Heart right ventricle (tissue), 16 donors: ENCODE measurements at regions of chr7 and their contacts with region 1.

Region 1: DNA sequence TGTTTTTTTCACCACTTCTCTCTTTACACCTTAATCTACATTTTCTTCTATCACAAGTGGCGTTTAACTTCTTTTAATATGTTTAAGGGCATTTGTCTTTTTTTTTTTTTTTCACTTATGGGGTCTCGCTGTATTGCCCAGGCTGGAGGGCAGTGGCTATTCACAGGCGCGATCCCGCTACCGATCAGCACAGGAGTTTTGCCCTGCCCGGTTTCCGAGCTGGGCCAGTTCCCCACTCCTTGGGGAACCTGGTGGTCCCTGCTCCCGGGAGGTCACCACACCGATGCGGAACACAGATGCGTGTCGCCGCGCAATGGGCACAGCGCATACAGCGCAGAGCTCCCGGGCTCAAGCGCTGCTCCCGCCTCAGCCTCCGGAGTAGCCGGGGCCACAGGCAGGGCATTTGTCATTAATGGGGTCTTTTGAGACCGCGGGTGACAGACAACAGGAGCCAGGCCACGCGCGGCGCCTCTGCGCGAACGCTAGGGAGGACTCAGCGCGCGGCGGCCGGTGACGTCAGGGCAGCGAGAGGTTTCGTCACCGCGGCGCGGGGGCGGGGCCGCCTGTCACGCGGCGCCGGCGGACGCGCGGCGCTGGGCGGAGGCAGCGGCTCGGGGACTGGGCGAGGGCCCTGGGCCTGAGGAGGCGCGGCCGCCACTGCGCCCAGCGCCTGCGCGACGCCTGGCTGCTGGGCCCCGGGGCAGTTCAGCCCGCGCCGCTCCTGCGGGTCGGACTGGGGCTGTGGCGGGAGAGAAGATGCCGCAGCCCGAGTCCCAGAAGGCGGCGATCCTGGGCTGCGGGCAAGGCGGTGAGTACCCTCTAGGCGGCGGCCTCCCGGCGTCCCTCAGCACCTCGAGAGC is at the start of gene GALNT11:
- DNase-seq: peak; percentile 79 to 89
- ATAC-seq: peak; percentile 96 to 100 (median 98)
- H3K4me3 ChIP-seq: peak within 1 kb of the TSS; percentile 64 to 96 (median 86)
- H3K27ac ChIP-seq: peak within 1 kb of the TSS in 9 of 10 donors; percentile 82 to 94 (median 87)
- H3K4me1 ChIP-seq: peaks cover 0 to 23% (median 13%) of the 10 kb centered on the region in 9 donors
- H3K27me3 ChIP-seq: no peaks in the 10 kb centered on the region
- CTCF ChIP-seq: peak in 5 of 9 donors; percentile 25 to 58 (median 40)
- total RNA-seq, gene GALNT11: 19.3 to 28.4 (median 22.9) TPM

Region 2: DNA sequence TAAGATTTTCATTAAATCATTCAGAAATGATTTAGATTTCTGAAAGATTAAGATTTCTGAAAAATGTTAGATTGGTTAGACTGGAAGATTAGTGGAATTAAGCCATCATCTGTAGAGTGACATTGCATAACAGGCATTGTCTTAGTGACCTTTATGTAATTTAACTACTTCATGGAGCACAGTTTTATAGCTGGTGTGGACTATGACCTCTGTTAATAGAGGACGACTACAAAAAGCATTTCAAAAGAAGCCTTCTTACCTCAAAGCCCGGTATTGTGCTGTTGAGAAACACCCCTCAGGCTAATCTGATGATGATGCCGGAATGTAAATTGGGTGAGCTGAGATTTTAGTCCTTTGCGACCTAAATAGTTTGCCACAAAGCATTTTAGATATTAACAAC is 55.8 kb after region 1 on chr7:
- intact Hi-C with region 1: no loop called
- DNase-seq: no peak
- ATAC-seq: no peak
- H3K4me3 ChIP-seq: no peak overlapping the region
- H3K27ac ChIP-seq: no peak overlapping the region
- H3K4me1 ChIP-seq: peaks cover 0 to 27% (median 15%) of the 10 kb centered on the region in 9 donors
- H3K27me3 ChIP-seq: no peaks in the 10 kb centered on the region
- CTCF ChIP-seq: no peak

Region 3: DNA sequence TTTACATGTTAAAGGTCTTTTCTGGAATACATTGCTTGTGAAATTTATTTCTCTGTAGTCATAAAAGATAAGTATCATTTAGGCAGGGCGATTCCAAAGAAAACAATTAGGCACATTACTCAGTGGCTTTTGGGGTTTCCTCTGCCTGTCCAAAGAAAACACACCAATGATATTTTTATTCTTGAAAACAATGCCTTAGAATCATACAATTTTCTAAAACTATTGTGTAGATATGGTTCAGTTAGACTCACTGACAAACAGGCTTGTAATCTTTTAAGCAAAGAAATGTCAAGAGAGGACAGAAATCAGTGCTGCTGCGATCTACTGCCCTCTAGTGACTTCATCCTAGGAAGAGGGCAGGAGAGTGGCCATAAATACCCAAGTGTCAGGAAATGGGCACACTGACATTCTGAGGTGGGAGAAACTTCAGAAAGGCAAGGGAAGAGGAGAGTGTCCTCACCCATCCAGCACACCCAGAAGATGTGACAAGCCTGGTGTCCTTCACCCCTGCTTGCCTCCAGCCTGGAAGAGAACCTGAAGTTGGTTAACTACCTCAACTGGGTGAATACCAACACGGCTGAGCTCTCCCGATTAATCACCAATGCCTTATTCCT is 120.7 kb after region 1 on chr7:
- intact Hi-C with region 1: loop called in 1 of 10 experiments (anchors 10 kb)
- DNase-seq: no peak
- ATAC-seq: peak; percentile 50 to 80 (median 64)
- H3K4me3 ChIP-seq: no peak overlapping the region
- H3K27ac ChIP-seq: peak overlapping the region in 2 of 10 donors; percentile 15 to 27
- H3K4me1 ChIP-seq: peaks cover 0 to 37% (median 14%) of the 10 kb centered on the region in 9 donors
- H3K27me3 ChIP-seq: no peaks in the 10 kb centered on the region
- CTCF ChIP-seq: peak in 8 of 9 donors; percentile 44 to 76 (median 64)